HEK293 (cell line): ENCODE measurements at regions of chr20 and their contacts with region 1.

Region 1: DNA sequence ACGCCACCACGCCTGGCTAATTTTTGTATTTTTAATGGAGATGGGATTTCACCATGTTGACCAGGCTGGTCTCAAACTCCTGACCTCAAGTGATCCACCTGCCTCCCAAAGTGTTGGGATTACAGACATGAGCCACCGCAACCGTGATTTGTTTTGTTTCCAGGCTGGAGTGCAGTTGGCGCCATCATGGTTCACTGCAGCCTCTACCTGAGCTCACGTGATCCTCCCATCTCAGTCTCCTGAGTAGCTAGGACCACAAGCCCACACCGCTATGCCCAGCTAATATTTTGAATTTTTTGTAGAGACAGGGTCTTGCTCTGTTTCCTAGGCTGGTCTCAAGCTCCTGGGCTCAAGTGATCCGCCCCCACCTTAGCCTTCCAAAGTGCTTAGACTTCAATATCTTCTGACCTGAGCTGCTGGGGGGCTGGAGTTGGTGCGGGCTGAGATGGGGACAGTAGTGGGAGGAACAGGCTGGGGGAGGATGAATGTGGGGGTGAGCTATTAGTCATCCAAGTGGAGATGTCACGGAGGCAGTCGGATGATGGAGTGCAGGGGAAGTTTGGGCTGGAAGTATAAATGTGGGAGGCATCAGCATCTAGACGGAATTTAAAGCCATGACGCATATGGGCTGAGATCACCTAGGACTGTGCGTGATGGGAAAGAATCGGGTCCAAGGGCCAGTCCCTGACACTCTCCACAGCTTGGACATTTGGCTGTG is 23.1 kb upstream of the ZMYND8 start:
- H3K4me3 ChIP-seq: no peak overlapping the region
- H3K27ac ChIP-seq: no peak overlapping the region
- H3K4me1 ChIP-seq: no peaks in the 10 kb centered on the region
- CTCF ChIP-seq: no peak

Region 2: GRCh38 chr20:47205577-47206498 is 173.8 kb before region 1 on chr20:
- CTCF ChIA-PET with region 1: interaction called, 36 read pairs
- POLR2A ChIA-PET with region 1: interaction called, 3 read pairs
- H3K4me3 ChIP-seq: no peak overlapping the region
- H3K27ac ChIP-seq: no peak overlapping the region
- H3K4me1 ChIP-seq: no peaks in the 10 kb centered on the region
- CTCF ChIP-seq: no peak; the same call in 1 of the 2 replicates

Region 3: GRCh38 chr20:47244451-47244850 is 135.1 kb before region 1 on chr20:
- CTCF ChIA-PET with region 1: interaction called, 14 read pairs
- POLR2A ChIA-PET with region 1: no interaction called
- H3K4me3 ChIP-seq: no peak overlapping the region
- H3K27ac ChIP-seq: no peak overlapping the region
- H3K4me1 ChIP-seq: peaks cover 6% of the 10 kb centered on the region; the same call in 1 of the 2 replicates
- CTCF ChIP-seq: no peak

Region 4: GRCh38 chr20:47296950-47297349 is 82.6 kb before region 1 on chr20:
- CTCF ChIA-PET with region 1: interaction called, 18 read pairs
- POLR2A ChIA-PET with region 1: no interaction called
- H3K4me3 ChIP-seq: no peak overlapping the region
- H3K27ac ChIP-seq: no peak overlapping the region
- H3K4me1 ChIP-seq: no peaks in the 10 kb centered on the region
- CTCF ChIP-seq: no peak

Region 5: GRCh38 chr20:47356526-47357295 is 22.9 kb before region 1 on chr20 and contains the start of gene ZMYND8:
- CTCF ChIA-PET with region 1: interaction called, 24 read pairs
- POLR2A ChIA-PET with region 1: interaction called, 7 read pairs
- H3K4me3 ChIP-seq: peak within 1 kb of the TSS; percentile 30
- H3K27ac ChIP-seq: peak within 1 kb of the TSS; percentile 97
- H3K4me1 ChIP-seq: peaks cover 49% of the 10 kb centered on the region
- CTCF ChIP-seq: no peak

Region 6: GRCh38 chr20:47620808-47621805 is 241.5 kb after region 1 on chr20:
- CTCF ChIA-PET with region 1: interaction called, 19 read pairs
- POLR2A ChIA-PET with region 1: interaction called, 3 read pairs
- H3K4me3 ChIP-seq: no peak overlapping the region
- H3K27ac ChIP-seq: no peak overlapping the region
- H3K4me1 ChIP-seq: no peaks in the 10 kb centered on the region
- CTCF ChIP-seq: peak; percentile 59